ENCODE measurements at regions of chr9 and their contacts with region 1.

Region 1: DNA sequence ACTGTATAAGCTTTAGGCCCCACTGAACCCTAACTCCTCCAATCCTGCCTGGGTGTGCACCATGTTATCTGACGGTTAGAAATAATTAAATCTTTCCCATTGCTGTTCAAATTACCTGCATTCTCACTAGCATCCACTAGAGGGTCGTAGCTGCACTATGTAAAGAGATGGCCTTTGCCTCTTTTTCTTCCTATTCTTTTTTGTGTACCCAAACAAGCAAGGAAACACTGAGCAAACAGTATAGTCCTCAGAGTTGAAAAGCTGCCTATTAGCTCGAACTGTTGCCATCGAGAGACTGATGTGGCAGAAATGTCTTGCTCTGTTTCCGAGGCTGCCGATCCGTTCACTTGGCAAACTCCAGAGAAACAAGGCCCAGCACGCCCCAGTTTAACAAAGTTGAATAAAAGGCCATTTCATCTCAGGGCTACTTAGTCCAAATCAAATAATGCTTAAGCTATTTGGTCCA is 163.8 kb upstream of the TRPM3 start:
- DNase-seq: peak; percentile 58
- H3K4me3 Mint-ChIP-seq: no peak overlapping the region
- H3K27ac Mint-ChIP-seq: no peak overlapping the region
- H3K4me1 Mint-ChIP-seq: no peaks in the 10 kb centered on the region
- H3K27me3 Mint-ChIP-seq: peaks cover 7% of the 10 kb centered on the region

Region 2: GRCh38 chr9:70811638-70812037 is 473.6 kb before region 1 on chr9:
- CTCF ChIA-PET with region 1: no interaction called
- intact Hi-C with region 1: no loop called
- DNase-seq: no peak
- H3K4me3 Mint-ChIP-seq: no peak overlapping the region
- H3K27ac Mint-ChIP-seq: no peak overlapping the region
- H3K4me1 Mint-ChIP-seq: no peaks in the 10 kb centered on the region
- H3K27me3 Mint-ChIP-seq: peaks cover 5% of the 10 kb centered on the region

Region 3: GRCh38 chr9:71223953-71224538 is 61.2 kb before region 1 on chr9:
- CTCF ChIA-PET with region 1: no interaction called
- intact Hi-C with region 1: no loop called
- DNase-seq: no peak
- H3K4me3 Mint-ChIP-seq: no peak overlapping the region
- H3K27ac Mint-ChIP-seq: no peak overlapping the region
- H3K4me1 Mint-ChIP-seq: no peaks in the 10 kb centered on the region
- H3K27me3 Mint-ChIP-seq: peaks cover 6% of the 10 kb centered on the region

Region 4: DNA sequence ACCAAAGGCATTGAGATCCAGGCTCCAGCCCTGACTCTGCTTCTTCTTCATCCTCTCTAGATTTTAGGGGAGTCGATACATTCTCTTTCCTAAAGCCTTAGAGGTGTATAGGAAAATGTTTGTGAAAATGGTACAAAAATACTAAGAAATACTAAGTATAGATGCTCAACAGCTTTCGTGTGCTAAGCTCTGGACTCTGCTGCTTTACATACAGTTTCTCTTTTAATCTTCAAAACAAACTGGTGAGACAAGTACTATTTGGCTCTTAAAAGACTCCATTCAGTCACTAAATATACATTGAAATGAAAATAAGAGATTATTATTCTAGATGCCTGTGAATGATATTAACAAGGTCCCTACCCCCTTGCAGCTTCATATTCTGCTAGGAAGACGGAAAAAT is 10.7 kb after region 1 on chr9:
- CTCF ChIA-PET with region 1: interaction called, 17 read pairs
- intact Hi-C with region 1: no loop called
- DNase-seq: no peak
- H3K4me3 Mint-ChIP-seq: no peak overlapping the region
- H3K27ac Mint-ChIP-seq: no peak overlapping the region
- H3K4me1 Mint-ChIP-seq: no peaks in the 10 kb centered on the region
- H3K27me3 Mint-ChIP-seq: peaks cover 2% of the 10 kb centered on the region

Region 5: GRCh38 chr9:71819115-71819739 is 534.0 kb after region 1 on chr9:
- CTCF ChIA-PET with region 1: interaction called, 10 read pairs
- intact Hi-C with region 1: loop called (anchors 1 kb)
- DNase-seq: peak; percentile 68
- H3K4me3 Mint-ChIP-seq: no peak overlapping the region
- H3K27ac Mint-ChIP-seq: no peak overlapping the region
- H3K4me1 Mint-ChIP-seq: peaks cover 16% of the 10 kb centered on the region
- H3K27me3 Mint-ChIP-seq: no peaks in the 10 kb centered on the region

Region 6: DNA sequence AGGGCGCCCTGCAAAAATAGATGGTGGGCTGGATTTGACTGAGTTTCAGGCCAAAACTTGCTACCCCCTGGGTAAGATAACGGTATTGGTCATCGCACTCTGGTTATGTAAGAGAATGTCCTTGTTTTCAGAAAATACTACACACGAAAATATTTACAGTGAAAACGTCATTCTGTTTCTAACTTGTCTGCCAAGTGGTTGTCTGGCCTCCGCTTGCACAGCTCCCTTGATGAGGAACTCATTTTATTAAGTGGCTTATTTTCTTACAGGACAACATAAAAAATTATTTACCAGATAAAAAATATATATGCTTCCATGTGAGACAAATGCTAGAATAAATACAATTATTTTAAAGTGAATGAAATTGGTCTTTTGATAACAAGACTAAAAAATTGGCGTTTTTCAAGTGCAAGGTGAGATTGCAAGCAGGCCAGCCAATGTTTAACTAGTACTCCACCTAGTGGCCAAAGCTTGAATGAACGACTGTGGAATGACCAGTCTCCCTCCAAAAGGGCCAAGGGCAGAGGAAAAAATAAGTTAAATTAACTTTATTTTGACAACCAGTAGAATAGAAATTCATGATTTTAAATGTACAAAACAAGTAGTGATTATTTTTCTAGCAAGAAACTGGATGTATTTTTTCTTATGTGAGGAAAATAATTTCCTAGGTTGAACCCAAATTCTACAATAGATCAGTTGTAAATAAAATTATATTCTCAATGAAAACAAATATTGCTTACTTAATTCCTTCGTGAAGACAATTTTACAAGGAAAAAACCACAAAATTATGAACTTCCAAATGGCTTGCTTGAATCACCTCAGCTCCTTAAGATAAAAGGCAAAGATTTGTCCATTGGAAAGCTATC is 986.6 kb after region 1 on chr9:
- CTCF ChIA-PET with region 1: no interaction called
- intact Hi-C with region 1: loop called (anchors 10 kb)
- DNase-seq: peak; percentile 69
- H3K4me3 Mint-ChIP-seq: no peak overlapping the region
- H3K27ac Mint-ChIP-seq: no peak overlapping the region
- H3K4me1 Mint-ChIP-seq: no peaks in the 10 kb centered on the region
- H3K27me3 Mint-ChIP-seq: no peaks in the 10 kb centered on the region

Measured in activated naive CD4-positive, alpha-beta T cell treated with anti-CD3 and anti-CD28 coated beads for 36 hours (primary cell).